ENCODE measurements at regions of chr19 and their contacts with region 1.

Region 1: GRCh38 chr19:4803736-4804695 is 12.5 kb downstream of the FEM1A start:
- DNase-seq: peak; percentile 75
- ATAC-seq: peak; percentile 92
- H3K4me3 Mint-ChIP-seq: no peak overlapping the region
- H3K27ac Mint-ChIP-seq: no peak overlapping the region
- H3K4me1 Mint-ChIP-seq: no peaks in the 10 kb centered on the region
- H3K27me3 Mint-ChIP-seq: no peaks in the 10 kb centered on the region

Region 2: GRCh38 chr19:4732680-4733114 is 71.3 kb before region 1 on chr19:
- CTCF ChIA-PET with region 1: interaction called, 14 read pairs
- DNase-seq: peak; percentile 74
- ATAC-seq: peak; percentile 88
- H3K4me3 Mint-ChIP-seq: peak overlapping the region; percentile 31
- H3K27ac Mint-ChIP-seq: no peak overlapping the region
- H3K4me1 Mint-ChIP-seq: peaks cover 11% of the 10 kb centered on the region
- H3K27me3 Mint-ChIP-seq: no peaks in the 10 kb centered on the region

Region 3: DNA sequence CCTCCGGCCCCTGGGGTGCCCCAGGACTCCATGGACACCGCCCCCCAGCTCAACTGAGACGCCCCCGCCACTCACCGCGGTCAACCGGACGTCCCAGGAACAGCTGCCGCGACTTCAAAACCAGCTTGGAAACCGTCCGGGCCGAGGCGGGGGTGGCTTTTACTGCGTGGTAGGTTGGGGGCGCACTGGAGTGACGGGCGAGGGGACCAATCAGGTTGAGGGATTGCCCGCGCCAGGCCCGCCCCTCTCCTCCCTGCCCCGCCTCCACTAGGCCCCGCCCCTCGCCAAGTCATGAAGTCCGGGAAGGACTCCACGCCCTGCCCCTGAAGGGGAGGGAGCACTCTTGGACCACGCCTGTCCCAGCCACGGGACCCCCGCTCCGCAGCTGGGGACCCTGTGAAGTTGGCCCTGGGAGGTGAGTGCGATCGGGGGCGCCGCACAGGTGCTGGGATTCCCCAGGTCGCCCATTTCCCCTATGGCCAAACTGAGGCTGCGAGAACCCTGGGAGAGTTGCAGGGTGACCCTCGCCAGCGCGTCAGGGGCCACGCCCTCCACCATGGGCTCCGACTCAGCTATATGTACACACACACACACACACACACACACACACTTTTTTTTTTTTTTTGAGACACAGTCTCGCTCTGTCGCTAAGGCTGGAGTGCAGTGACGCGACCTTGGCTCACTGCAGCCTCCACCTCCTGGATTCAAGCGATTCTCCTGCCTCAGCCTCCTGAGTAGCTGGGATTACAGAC is 63.7 kb after region 1 on chr19 and contains the start of gene PLIN3:
- CTCF ChIA-PET with region 1: interaction called, 43 read pairs
- DNase-seq: peak; percentile 94
- ATAC-seq: peak; percentile 94
- H3K4me3 Mint-ChIP-seq: peak within 1 kb of the TSS; percentile 74
- H3K27ac Mint-ChIP-seq: peak within 1 kb of the TSS; percentile 65
- H3K4me1 Mint-ChIP-seq: peaks cover 19% of the 10 kb centered on the region
- H3K27me3 Mint-ChIP-seq: peaks cover 3% of the 10 kb centered on the region
- total RNA-seq, gene PLIN3: 29.0 to 32.4 TPM

Region 4: GRCh38 chr19:4889034-4889815 is 85.2 kb after region 1 on chr19:
- CTCF ChIA-PET with region 1: no interaction called
- DNase-seq: no peak
- ATAC-seq: no peak
- H3K4me3 Mint-ChIP-seq: no peak overlapping the region
- H3K27ac Mint-ChIP-seq: no peak overlapping the region
- H3K4me1 Mint-ChIP-seq: no peaks in the 10 kb centered on the region
- H3K27me3 Mint-ChIP-seq: no peaks in the 10 kb centered on the region